ENCODE measurements at regions of chr13 and their contacts with region 1.

Region 1: GRCh38 chr13:26221721-26222519 is at the start of gene RNF6:
- DNase-seq: peak; percentile 95 to 98
- H3K4me3 ChIP-seq: peak within 1 kb of the TSS; percentile 79
- H3K4me3 Mint-ChIP-seq: peak within 1 kb of the TSS; percentile 95
- H3K27ac Mint-ChIP-seq: peak within 1 kb of the TSS; percentile 94
- H3K4me1 ChIP-seq: peaks cover 8% of the 10 kb centered on the region
- H3K4me1 Mint-ChIP-seq: peaks cover 11% of the 10 kb centered on the region
- H3K27me3 ChIP-seq: no peaks in the 10 kb centered on the region
- H3K27me3 Mint-ChIP-seq: no peaks in the 10 kb centered on the region
- CTCF ChIP-seq: no peak
- total RNA-seq, gene RNF6: 39.1 and 41.4 TPM in 2 replicates

Region 2: GRCh38 chr13:26280822-26281221 is 58.9 kb after region 1 on chr13:
- CTCF ChIA-PET with region 1: interaction called, 4 read pairs
- POLR2A ChIA-PET with region 1: no interaction called
- intact Hi-C with region 1: loop called (anchors 1 kb)
- DNase-seq: peak in 1 of 2 experiments; percentile 26
- H3K4me3 ChIP-seq: no peak overlapping the region
- H3K4me3 Mint-ChIP-seq: no peak overlapping the region
- H3K27ac Mint-ChIP-seq: peak overlapping the region; percentile 65
- H3K4me1 ChIP-seq: peaks cover 26% of the 10 kb centered on the region
- H3K4me1 Mint-ChIP-seq: peaks cover 32% of the 10 kb centered on the region
- H3K27me3 ChIP-seq: no peaks in the 10 kb centered on the region
- H3K27me3 Mint-ChIP-seq: no peaks in the 10 kb centered on the region
- CTCF ChIP-seq: no peak

Measured in Caco-2 (cell line).